ENCODE measurements at regions of chr15 and their contacts with region 1.

Region 1: DNA sequence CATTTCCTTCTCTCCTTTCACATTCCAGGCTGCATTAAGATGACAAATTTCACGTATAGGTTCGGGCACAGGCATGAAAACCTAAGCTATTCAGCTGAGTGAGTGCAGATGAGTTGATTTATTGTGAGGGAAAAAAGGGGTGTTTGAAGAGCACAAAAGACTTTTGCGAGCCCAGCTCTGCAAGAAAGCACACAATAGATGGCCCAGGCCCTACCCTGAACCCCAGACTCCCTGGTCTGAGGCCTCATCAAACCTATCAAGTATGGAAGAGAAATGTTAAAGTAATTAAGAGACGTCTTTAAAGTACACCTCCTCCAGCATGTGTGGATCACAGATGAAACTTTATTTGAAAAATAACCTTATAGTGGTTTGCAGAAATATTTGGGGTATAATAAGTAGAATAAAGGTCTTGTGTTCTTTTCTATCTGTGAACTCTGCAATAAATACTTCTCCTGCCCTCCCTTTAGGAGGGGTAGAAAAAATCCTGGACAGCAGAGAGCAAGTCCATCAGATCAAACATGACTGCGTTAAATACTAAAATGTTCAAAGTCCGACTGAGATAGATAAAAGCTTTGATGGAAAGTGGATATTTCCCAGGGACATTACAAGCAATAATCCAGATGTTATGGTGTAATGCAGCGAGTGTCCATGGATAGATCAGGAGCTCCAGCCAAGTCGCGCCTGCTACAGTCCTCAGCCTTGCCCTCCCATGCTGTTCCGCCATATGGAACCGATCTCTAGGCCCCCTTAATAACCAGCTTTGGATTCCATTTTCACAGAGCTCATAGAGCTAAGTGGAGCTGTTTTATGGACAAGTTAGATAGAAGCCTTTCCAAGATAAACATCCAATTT is 121.5 kb downstream of the MCTP2 start:
- DNase-seq: no peak
- H3K4me3 ChIP-seq: no peak overlapping the region
- H3K27ac ChIP-seq: no peak overlapping the region
- H3K4me1 ChIP-seq: no peaks in the 10 kb centered on the region
- H3K27me3 ChIP-seq: no peaks in the 10 kb centered on the region
- CTCF ChIP-seq: no peak
- EP300 ChIP-seq: no peak
- POLR2A ChIP-seq: no peak
- RAD21 ChIP-seq: no peak

Region 2: GRCh38 chr15:94335616-94336015 is 17.2 kb before region 1 on chr15:
- CTCF ChIA-PET with region 1: interaction called, 10 read pairs
- POLR2A ChIA-PET with region 1: no interaction called
- DNase-seq: no peak
- H3K4me3 ChIP-seq: no peak overlapping the region
- H3K27ac ChIP-seq: no peak overlapping the region
- H3K4me1 ChIP-seq: no peaks in the 10 kb centered on the region
- H3K27me3 ChIP-seq: no peaks in the 10 kb centered on the region
- CTCF ChIP-seq: no peak
- EP300 ChIP-seq: no peak
- POLR2A ChIP-seq: no peak
- RAD21 ChIP-seq: no peak

Region 3: DNA sequence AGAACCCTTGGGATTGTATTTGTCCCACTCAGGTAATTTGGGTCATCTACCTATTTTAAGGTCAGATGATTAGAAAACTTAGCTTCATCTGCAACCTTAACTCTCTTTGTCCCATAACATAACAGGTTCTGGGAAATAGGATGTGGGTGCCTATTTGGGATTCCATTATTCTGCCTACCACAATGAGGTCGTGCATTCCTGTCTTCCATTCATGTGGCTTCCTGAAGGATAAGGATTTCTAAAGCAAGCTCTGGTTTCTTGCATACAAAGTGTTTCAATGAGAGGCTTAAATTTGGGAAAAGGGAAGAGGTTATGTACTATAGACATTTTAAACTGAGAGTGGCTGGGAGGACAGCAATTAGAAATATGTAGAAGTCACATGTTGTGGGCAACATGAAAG is 68.8 kb after region 1 on chr15:
- CTCF ChIA-PET with region 1: no interaction called
- POLR2A ChIA-PET with region 1: no interaction called
- DNase-seq: no peak
- H3K4me3 ChIP-seq: no peak overlapping the region
- H3K27ac ChIP-seq: no peak overlapping the region
- H3K4me1 ChIP-seq: no peaks in the 10 kb centered on the region
- H3K27me3 ChIP-seq: no peaks in the 10 kb centered on the region
- CTCF ChIP-seq: no peak
- EP300 ChIP-seq: no peak
- POLR2A ChIP-seq: no peak
- RAD21 ChIP-seq: no peak

Measured in H1 (cell line).